Calu3 (cell line): ENCODE measurements at regions of chr2 and their contacts with region 1.

Region 1: DNA sequence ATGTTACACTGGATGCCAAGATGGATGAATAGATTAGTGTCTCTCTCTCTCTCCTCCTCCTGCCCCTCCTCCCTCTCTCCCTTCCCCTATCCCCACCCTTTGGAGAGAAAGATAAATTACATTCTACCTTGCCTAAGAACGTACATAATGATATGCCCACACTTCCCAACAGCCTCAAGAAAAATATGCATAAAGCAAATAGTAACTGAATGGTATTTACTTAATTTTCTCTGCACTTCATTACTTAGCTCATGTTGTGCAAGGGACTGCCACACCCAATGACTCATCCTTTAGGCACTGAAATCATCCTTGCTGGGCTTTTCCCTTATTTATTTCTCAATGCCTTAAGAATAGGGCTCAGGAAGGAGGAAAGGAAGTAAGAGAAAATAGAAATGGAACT is 137.3 kb upstream of the PID1 start:
- DNase-seq: peak; percentile 74
- H3K4me3 Mint-ChIP-seq: peak overlapping the region; percentile 11
- H3K27ac Mint-ChIP-seq: peak overlapping the region; percentile 100
- H3K4me1 Mint-ChIP-seq: peaks cover 47% of the 10 kb centered on the region
- H3K27me3 Mint-ChIP-seq: no peaks in the 10 kb centered on the region
- CTCF ChIP-seq: no peak

Region 2: DNA sequence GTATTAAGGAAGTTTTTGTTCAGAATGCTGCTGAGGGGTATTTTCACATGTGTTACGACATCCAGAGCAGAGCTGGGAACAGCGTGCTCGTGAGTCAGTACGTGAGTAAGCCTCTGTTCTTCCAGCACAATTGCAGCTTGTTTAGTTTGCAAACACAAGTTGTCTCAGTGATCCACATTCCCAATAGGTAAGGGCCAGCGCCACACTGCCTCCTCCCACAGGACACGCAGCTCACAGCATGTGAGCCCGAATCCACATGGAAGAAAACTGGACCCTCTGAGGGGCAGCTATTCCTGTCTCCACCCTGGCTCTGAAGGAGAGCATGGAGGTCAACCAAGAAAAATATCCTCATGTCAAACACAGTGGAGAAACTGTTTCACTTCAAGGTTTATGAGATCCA is 36.7 kb after region 1 on chr2:
- CTCF ChIA-PET with region 1: no interaction called
- intact Hi-C with region 1: loop called (anchors 2 kb)
- DNase-seq: peak; percentile 68
- H3K4me3 Mint-ChIP-seq: peak overlapping the region; percentile 10
- H3K27ac Mint-ChIP-seq: peak overlapping the region; percentile 83
- H3K4me1 Mint-ChIP-seq: peaks cover 17% of the 10 kb centered on the region
- H3K27me3 Mint-ChIP-seq: no peaks in the 10 kb centered on the region
- CTCF ChIP-seq: no peak

Region 3: GRCh38 chr2:229463525-229464346 is 55.4 kb after region 1 on chr2:
- CTCF ChIA-PET with region 1: no interaction called
- intact Hi-C with region 1: no loop called
- DNase-seq: no peak
- H3K4me3 Mint-ChIP-seq: no peak overlapping the region
- H3K27ac Mint-ChIP-seq: no peak overlapping the region
- H3K4me1 Mint-ChIP-seq: no peaks in the 10 kb centered on the region
- H3K27me3 Mint-ChIP-seq: no peaks in the 10 kb centered on the region
- CTCF ChIP-seq: no peak